CD14-positive monocyte (primary cell): ENCODE measurements at regions of chr1 and their contacts with region 1.

Region 1: GRCh38 chr1:31413405-31414125 is 552 bp downstream of the SERINC2 start:
- DNase-seq: peak; percentile 42 to 56 (median 45)
- H3K4me3 ChIP-seq: peak overlapping the region; percentile 47 to 85 (median 72)
- H3K4me3 Mint-ChIP-seq: peak overlapping the region; percentile 86 to 100
- H3K27ac ChIP-seq: peak overlapping the region in 1 of 2 donors; percentile 26
- H3K27ac Mint-ChIP-seq: peak overlapping the region in 5 of 7 donors; percentile 27 to 81 (median 61)
- H3K4me1 ChIP-seq: peaks cover 10 to 11% of the 10 kb centered on the region in 2 donors
- H3K4me1 Mint-ChIP-seq: peaks cover 19% of the 10 kb centered on the region
- H3K27me3 ChIP-seq: peaks cover 21 to 45% of the 10 kb centered on the region in 2 donors
- H3K27me3 Mint-ChIP-seq: peaks cover 49 to 67% (median 64%) of the 10 kb centered on the region in 3 donors
- CTCF ChIP-seq: no peak

Region 2: GRCh38 chr1:31182352-31182751 is 231.2 kb before region 1 on chr1:
- intact Hi-C with region 1: loop called in 1 of 2 experiments (anchors 10 kb)
- DNase-seq: peak; percentile 38 to 71 (median 46)
- H3K4me3 ChIP-seq: peak overlapping the region in 1 of 3 experiments; percentile 54
- H3K4me3 Mint-ChIP-seq: peak overlapping the region in 1 of 2 donors; percentile 75
- H3K27ac ChIP-seq: no peak overlapping the region
- H3K27ac Mint-ChIP-seq: no peak overlapping the region
- H3K4me1 ChIP-seq: peaks cover 11 to 14% of the 10 kb centered on the region in 2 donors
- H3K4me1 Mint-ChIP-seq: peaks cover 13% of the 10 kb centered on the region
- H3K27me3 ChIP-seq: peaks cover 0 to 2% of the 10 kb centered on the region in 2 donors
- H3K27me3 Mint-ChIP-seq: peaks cover 5 to 37% (median 24%) of the 10 kb centered on the region in 3 donors
- CTCF ChIP-seq: no peak

Region 3: DNA sequence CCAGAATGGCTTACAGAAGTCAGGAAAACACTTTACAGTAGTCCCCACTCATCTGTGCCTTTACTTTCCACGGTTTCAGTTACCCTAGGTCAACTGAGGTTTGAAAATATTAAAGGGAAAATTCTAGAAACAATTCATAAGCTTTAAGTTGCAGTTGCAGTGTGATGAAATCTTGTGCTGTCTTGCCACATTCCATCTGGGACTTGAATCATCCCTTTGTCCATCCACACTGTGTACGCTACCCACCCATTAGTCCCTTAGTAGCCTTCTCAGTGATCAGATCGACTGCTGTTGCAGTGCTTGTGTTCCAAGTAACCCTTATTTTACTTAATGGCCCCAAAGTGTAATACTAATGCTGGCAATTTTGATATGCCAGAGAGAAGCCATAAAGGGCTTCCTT is 86.2 kb before region 1 on chr1:
- intact Hi-C with region 1: no loop called
- DNase-seq: no peak
- H3K4me3 ChIP-seq: no peak overlapping the region
- H3K4me3 Mint-ChIP-seq: no peak overlapping the region
- H3K27ac ChIP-seq: no peak overlapping the region
- H3K27ac Mint-ChIP-seq: no peak overlapping the region
- H3K4me1 ChIP-seq: no peaks in the 10 kb centered on the region
- H3K4me1 Mint-ChIP-seq: no peaks in the 10 kb centered on the region
- H3K27me3 ChIP-seq: no peaks in the 10 kb centered on the region
- H3K27me3 Mint-ChIP-seq: peaks cover 0 to 1% (median 0%) of the 10 kb centered on the region in 3 donors
- CTCF ChIP-seq: no peak

Region 4: GRCh38 chr1:31364561-31365255 is 48.9 kb before region 1 on chr1:
- intact Hi-C with region 1: no loop called
- DNase-seq: no peak
- H3K4me3 ChIP-seq: no peak overlapping the region
- H3K4me3 Mint-ChIP-seq: no peak overlapping the region
- H3K27ac ChIP-seq: no peak overlapping the region
- H3K27ac Mint-ChIP-seq: peak overlapping the region in 1 of 7 donors; percentile 14
- H3K4me1 ChIP-seq: no peaks in the 10 kb centered on the region
- H3K4me1 Mint-ChIP-seq: no peaks in the 10 kb centered on the region
- H3K27me3 ChIP-seq: no peaks in the 10 kb centered on the region
- H3K27me3 Mint-ChIP-seq: no peaks in the 10 kb centered on the region
- CTCF ChIP-seq: no peak

Region 5: DNA sequence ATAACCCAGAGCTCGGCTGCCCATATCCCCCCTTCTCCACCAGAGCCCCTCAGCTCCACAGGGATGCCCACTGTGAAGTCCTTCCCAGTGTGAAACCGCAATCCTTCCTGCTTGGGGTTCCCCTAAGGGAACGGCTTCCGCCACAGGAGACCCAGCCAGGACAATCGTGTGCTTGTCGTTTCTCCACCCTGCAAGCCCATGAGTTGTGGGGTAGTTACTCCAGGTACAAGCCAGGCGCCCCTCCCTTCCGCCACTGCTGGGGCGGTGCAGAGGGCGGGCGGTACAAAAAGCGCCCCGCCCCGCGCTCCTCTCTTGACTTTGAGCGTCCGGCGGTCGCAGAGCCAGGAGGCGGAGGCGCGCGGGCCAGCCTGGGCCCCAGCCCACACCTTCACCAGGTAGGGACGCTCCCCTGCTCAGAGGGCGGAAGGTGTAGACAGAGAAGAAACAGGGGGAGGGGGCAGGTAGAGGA is 162.7 kb after region 1 on chr1 and contains the start of gene TINAGL1:
- intact Hi-C with region 1: no loop called
- DNase-seq: no peak
- H3K4me3 ChIP-seq: no peak within 1 kb of the TSS
- H3K4me3 Mint-ChIP-seq: peak within 1 kb of the TSS; percentile 31 to 51
- H3K27ac ChIP-seq: no peak within 1 kb of the TSS
- H3K27ac Mint-ChIP-seq: no peak within 1 kb of the TSS
- H3K4me1 ChIP-seq: peaks cover 5% of the 10 kb centered on the region in 2 donors
- H3K4me1 Mint-ChIP-seq: peaks cover 17% of the 10 kb centered on the region
- H3K27me3 ChIP-seq: peaks cover 0 to 16% of the 10 kb centered on the region in 2 donors
- H3K27me3 Mint-ChIP-seq: peaks cover 13 to 22% (median 14%) of the 10 kb centered on the region in 3 donors
- CTCF ChIP-seq: no peak
- polyA plus RNA-seq, gene TINAGL1: 0.07 TPM in 1 of 3 donors, not detected in the others